KBM-7 (cell line): ENCODE measurements at regions of chr21 and their contacts with region 1.

Region 1: GRCh38 chr21:35658242-35658641 is 402.1 kb downstream of the SETD4 start:
- DNase-seq: peak; percentile 73

Region 2: GRCh38 chr21:35400233-35400957 is 257.8 kb before region 1 on chr21:
- in situ Hi-C with region 1: no loop called
- DNase-seq: peak; percentile 83

Region 3: DNA sequence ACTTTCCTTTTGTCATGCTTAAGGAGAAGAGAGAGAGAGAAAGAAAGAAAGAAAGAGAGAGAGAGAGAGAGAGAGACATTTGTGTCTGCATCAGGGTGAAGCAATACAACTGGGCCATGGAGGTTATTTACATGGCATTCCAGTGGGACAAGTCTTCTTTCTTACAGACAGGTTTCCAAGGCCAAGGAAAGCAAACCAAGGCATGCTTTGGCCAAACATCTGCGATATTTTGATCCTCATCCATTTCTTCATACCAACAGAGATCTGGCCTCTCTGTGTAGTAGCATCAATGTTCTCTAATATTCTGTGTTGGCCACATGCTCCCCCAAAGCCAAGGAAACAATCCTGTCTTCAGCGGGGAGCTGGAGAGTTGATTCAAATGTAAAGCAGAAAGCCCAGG is 109.9 kb after region 1 on chr21:
- in situ Hi-C with region 1: loop called (anchors 25 kb)
- DNase-seq: no peak

Region 4: DNA sequence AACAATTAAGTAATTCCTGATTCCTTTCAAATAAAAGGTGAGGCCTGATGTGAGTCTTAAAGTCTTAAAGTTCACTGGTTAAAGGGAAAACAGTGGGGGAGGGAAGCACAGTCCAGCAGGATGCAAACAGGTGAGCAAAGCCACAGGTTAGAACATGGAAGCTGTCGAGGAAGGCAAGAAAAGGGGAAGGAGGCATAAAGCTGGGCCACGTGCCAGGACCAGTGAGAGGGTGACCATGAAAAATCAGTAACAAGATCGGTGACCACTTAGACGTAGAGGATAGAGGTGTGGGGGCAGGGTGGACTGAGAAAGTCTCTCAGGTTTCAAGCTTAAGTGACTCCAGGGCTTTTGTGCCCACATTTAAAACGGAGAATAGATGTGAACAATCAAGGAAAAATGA is 170.8 kb after region 1 on chr21:
- in situ Hi-C with region 1: no loop called
- DNase-seq: peak; percentile 38